Activated naive CD4-positive, alpha-beta T cell treated with anti-CD3 and anti-CD28 coated beads for 36 hours (primary cell): ENCODE measurements at regions of chr2 and their contacts with region 1.

Region 1: GRCh38 chr2:39492095-39492590 is 55.1 kb upstream of the MAP4K3 start:
- DNase-seq: peak; percentile 67
- H3K4me3 Mint-ChIP-seq: peak overlapping the region; percentile 37
- H3K27ac Mint-ChIP-seq: peak overlapping the region; percentile 53
- H3K4me1 Mint-ChIP-seq: peaks cover 30% of the 10 kb centered on the region
- H3K27me3 Mint-ChIP-seq: peaks cover 6% of the 10 kb centered on the region

Region 2: GRCh38 chr2:38806015-38806732 is 686.0 kb before region 1 on chr2:
- CTCF ChIA-PET with region 1: no interaction called
- intact Hi-C with region 1: no loop called
- DNase-seq: no peak
- H3K4me3 Mint-ChIP-seq: no peak overlapping the region
- H3K27ac Mint-ChIP-seq: no peak overlapping the region
- H3K4me1 Mint-ChIP-seq: no peaks in the 10 kb centered on the region
- H3K27me3 Mint-ChIP-seq: no peaks in the 10 kb centered on the region

Region 3: GRCh38 chr2:39216346-39217191 is 275.6 kb before region 1 on chr2:
- CTCF ChIA-PET with region 1: no interaction called
- intact Hi-C with region 1: loop called (anchors 1 kb)
- DNase-seq: peak; percentile 64
- H3K4me3 Mint-ChIP-seq: peak overlapping the region; percentile 57
- H3K27ac Mint-ChIP-seq: peak overlapping the region; percentile 87
- H3K4me1 Mint-ChIP-seq: peaks cover 36% of the 10 kb centered on the region
- H3K27me3 Mint-ChIP-seq: no peaks in the 10 kb centered on the region

Region 4: DNA sequence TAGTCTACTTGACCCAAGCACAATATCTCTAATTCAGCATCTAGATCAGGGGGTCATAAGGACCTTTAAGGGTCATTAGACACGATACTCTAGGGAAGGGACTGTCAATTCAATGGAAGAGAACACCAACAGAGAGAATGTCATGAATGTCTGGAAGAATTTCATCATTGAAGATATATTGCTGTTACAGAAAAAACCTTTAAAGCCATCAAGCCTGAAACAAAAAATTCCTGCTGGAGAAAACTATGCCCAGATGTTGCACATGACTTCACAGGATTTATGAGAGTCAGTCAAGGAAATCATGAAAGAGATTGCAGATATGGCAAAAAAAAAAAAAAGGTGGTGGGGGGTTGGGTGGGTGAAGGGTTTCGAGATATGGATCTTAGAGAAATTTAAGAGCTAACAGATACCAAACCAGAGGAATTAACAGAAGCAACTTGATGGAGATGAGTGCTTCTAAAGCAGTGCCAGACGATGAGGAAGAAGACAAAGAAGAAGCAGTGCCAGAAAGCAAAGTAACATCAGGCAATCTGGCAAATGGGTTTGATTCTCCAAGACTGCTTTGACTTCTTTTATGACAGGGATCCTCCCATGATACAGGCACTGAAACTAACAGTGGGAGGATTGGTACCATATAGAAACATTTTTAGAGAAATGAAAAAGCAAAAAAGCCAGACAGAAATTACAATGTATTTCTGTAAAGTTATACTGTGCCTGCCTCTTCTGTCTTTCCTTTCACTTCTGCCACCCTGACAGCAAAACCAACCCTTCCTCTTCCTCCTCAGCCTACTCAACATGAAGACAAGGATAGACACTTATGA is 83.6 kb before region 1 on chr2:
- CTCF ChIA-PET with region 1: no interaction called
- intact Hi-C with region 1: loop called (anchors 1 kb)
- DNase-seq: no peak
- H3K4me3 Mint-ChIP-seq: no peak overlapping the region
- H3K27ac Mint-ChIP-seq: no peak overlapping the region
- H3K4me1 Mint-ChIP-seq: peaks cover 78% of the 10 kb centered on the region
- H3K27me3 Mint-ChIP-seq: no peaks in the 10 kb centered on the region

Region 5: GRCh38 chr2:39469807-39470206 is 22.3 kb before region 1 on chr2:
- CTCF ChIA-PET with region 1: interaction called, 3 read pairs
- intact Hi-C with region 1: loop called (anchors 1 kb)
- DNase-seq: peak; percentile 39
- H3K4me3 Mint-ChIP-seq: no peak overlapping the region
- H3K27ac Mint-ChIP-seq: no peak overlapping the region
- H3K4me1 Mint-ChIP-seq: peaks cover 34% of the 10 kb centered on the region
- H3K27me3 Mint-ChIP-seq: no peaks in the 10 kb centered on the region

Region 6: DNA sequence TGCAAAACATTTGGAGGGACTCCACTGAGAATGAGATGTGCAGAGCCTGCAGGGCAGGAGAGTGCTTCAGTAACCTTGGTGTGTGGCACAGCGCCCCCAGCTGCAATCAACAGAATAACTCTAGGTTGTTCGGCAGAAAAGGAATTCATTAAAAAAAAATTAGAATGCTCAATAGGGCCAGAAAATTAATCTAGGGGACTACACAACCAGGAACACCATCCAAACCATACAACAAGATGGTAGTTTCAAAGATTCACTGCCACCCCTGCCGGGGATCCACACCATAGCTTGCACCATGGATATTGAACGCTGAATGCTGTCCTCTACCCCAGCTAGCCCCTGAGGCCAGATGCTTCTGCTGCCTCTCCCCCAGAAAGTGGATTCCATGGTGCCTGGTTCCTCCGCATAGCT is 236.8 kb after region 1 on chr2:
- CTCF ChIA-PET with region 1: no interaction called
- intact Hi-C with region 1: loop called (anchors 1 kb)
- DNase-seq: peak; percentile 63
- H3K4me3 Mint-ChIP-seq: no peak overlapping the region
- H3K27ac Mint-ChIP-seq: no peak overlapping the region
- H3K4me1 Mint-ChIP-seq: peaks cover 2% of the 10 kb centered on the region
- H3K27me3 Mint-ChIP-seq: no peaks in the 10 kb centered on the region